ENCODE measurements at regions of chr10 and their contacts with region 1.

Region 1: GRCh38 chr10:97686962-97687784 is at the start of gene AVPI1:
- DNase-seq: peak; percentile 96 to 97 (median 97)
- H3K4me3 ChIP-seq: peak within 1 kb of the TSS; percentile 86 to 87
- H3K4me3 Mint-ChIP-seq: peak within 1 kb of the TSS; percentile 84 to 92 (median 88)
- H3K27ac ChIP-seq: peak within 1 kb of the TSS; percentile 71
- H3K27ac Mint-ChIP-seq: peak within 1 kb of the TSS; percentile 64 to 96 (median 92)
- H3K4me1 ChIP-seq: peaks cover 29% of the 10 kb centered on the region
- H3K4me1 Mint-ChIP-seq: peaks cover 5 to 15% (median 10%) of the 10 kb centered on the region in 4 donors
- H3K27me3 ChIP-seq: no peaks in the 10 kb centered on the region
- H3K27me3 Mint-ChIP-seq: no peaks in the 10 kb centered on the region
- total RNA-seq, gene AVPI1: 1.9 to 2.2 TPM

Region 2: DNA sequence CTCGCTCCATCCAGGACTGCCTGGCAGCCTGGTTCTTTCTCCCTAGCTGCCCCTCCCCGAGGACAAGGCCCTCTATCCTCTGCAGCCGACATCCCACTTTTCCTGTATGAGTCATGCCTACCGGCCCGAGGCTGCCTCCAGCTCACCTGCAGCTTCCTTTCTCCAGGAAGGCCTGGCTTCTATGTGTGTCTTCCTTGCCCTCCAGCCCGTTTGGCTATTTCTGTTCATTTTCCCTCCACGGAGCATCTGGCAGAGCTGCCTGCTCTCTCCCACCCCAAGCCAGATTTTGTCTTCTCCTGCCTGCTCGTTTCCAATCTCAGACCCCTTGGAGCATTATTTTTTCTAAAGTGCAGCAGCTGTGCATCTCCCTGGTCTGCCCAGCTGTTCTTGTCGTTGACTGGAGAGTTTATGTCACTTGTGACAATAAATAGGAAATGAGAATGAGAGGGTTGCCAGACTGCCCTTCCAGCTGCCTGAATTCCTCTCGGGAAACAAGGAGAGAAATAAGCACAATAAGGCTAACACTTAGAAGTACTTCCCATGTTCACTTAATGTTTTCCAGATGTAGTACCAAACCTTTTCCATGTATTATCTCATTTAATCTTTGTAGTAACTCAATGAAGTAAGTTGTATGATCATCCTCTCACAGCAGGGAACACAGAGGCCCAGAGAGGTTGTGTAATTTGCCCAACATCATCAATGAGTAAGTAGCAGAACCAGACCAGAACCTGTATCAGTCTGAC is 168.7 kb before region 1 on chr10:
- CTCF ChIA-PET with region 1: no interaction called
- POLR2A ChIA-PET with region 1: no interaction called
- intact Hi-C with region 1: no loop called
- DNase-seq: no peak
- H3K4me3 ChIP-seq: no peak overlapping the region
- H3K4me3 Mint-ChIP-seq: no peak overlapping the region
- H3K27ac ChIP-seq: no peak overlapping the region
- H3K27ac Mint-ChIP-seq: peak overlapping the region in 2 of 7 donors; percentile 6 to 24
- H3K4me1 ChIP-seq: no peaks in the 10 kb centered on the region
- H3K4me1 Mint-ChIP-seq: no peaks in the 10 kb centered on the region
- H3K27me3 ChIP-seq: no peaks in the 10 kb centered on the region
- H3K27me3 Mint-ChIP-seq: peaks cover 2 to 10% of the 10 kb centered on the region in 2 donors

Region 3: GRCh38 chr10:97632949-97633884 is 54.0 kb before region 1 on chr10 and contains the start of gene MORN4:
- CTCF ChIA-PET with region 1: no interaction called
- POLR2A ChIA-PET with region 1: interaction called, 3 read pairs
- intact Hi-C with region 1: loop called (anchors 2 kb)
- DNase-seq: peak; percentile 91 to 92 (median 91)
- H3K4me3 ChIP-seq: peak within 1 kb of the TSS; percentile 53 to 55
- H3K4me3 Mint-ChIP-seq: peak within 1 kb of the TSS; percentile 92 to 99 (median 97)
- H3K27ac ChIP-seq: peak within 1 kb of the TSS; percentile 36
- H3K27ac Mint-ChIP-seq: peak within 1 kb of the TSS; percentile 83 to 97 (median 91)
- H3K4me1 ChIP-seq: peaks cover 10% of the 10 kb centered on the region
- H3K4me1 Mint-ChIP-seq: peaks cover 7 to 19% (median 14%) of the 10 kb centered on the region in 4 donors
- H3K27me3 ChIP-seq: no peaks in the 10 kb centered on the region
- H3K27me3 Mint-ChIP-seq: no peaks in the 10 kb centered on the region
- total RNA-seq, gene MORN4: 2.1 to 3.0 TPM

Region 4: GRCh38 chr10:97676770-97677581 is 10.2 kb before region 1 on chr10:
- CTCF ChIA-PET with region 1: interaction called, 66 read pairs
- POLR2A ChIA-PET with region 1: interaction called, 13 read pairs
- intact Hi-C with region 1: no loop called
- DNase-seq: peak; percentile 48 to 56 (median 53)
- H3K4me3 ChIP-seq: no peak overlapping the region
- H3K4me3 Mint-ChIP-seq: no peak overlapping the region
- H3K27ac ChIP-seq: no peak overlapping the region
- H3K27ac Mint-ChIP-seq: peak overlapping the region in 4 of 7 donors; percentile 7 to 73 (median 38)
- H3K4me1 ChIP-seq: no peaks in the 10 kb centered on the region
- H3K4me1 Mint-ChIP-seq: peaks cover 0 to 1% (median 0%) of the 10 kb centered on the region in 4 donors
- H3K27me3 ChIP-seq: no peaks in the 10 kb centered on the region
- H3K27me3 Mint-ChIP-seq: no peaks in the 10 kb centered on the region

Region 5: GRCh38 chr10:97714048-97714371 is 26.8 kb after region 1 on chr10:
- CTCF ChIA-PET with region 1: interaction called, 118 read pairs
- POLR2A ChIA-PET with region 1: interaction called, 31 read pairs
- intact Hi-C with region 1: no loop called
- DNase-seq: peak; percentile 50 to 69 (median 54)
- H3K4me3 ChIP-seq: peak overlapping the region; percentile 30 to 55
- H3K4me3 Mint-ChIP-seq: peak overlapping the region; percentile 98 to 100 (median 99)
- H3K27ac ChIP-seq: no peak overlapping the region
- H3K27ac Mint-ChIP-seq: peak overlapping the region; percentile 37 to 96 (median 92)
- H3K4me1 ChIP-seq: peaks cover 6% of the 10 kb centered on the region
- H3K4me1 Mint-ChIP-seq: peaks cover 7 to 22% (median 14%) of the 10 kb centered on the region in 4 donors
- H3K27me3 ChIP-seq: no peaks in the 10 kb centered on the region
- H3K27me3 Mint-ChIP-seq: peaks cover 7 to 9% of the 10 kb centered on the region in 2 donors

Region 6: DNA sequence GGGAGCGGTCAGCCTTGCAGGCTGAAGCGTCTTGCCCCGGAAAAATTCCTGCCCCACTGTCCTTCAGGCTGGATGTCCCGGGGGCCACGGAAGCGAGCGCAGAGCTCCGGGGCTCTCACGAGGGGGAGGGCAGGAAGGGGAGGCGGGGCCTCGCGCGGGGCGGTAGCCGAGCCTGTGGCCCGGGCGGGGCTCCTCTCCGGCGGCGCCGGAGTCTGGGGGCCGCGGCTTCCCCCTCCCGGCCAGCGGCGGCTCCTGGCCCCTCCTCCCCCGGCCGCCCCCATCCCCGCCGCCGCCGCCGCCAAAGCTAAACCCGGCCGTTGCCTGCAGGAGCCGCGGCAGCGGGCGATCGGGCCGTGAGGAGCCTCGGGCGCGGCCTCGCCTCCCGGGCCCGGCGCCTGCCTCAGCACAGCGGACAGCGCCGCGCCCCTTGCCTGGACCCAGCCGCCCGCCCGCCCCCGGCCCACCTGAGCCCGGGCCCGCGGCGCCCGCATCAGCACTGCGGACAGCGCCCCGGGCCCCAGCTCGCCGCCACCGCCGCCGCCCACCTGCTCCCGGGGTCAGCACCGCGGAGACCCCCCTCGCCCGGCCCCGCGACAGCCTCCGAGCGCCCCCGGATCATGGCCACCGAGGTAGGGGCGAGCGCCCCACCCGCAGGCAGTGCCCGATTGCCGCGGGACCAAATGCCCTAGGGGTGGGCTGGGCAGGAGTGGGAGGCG is 162.7 kb after region 1 on chr10 and contains the start of gene GOLGA7B:
- CTCF ChIA-PET with region 1: no interaction called
- POLR2A ChIA-PET with region 1: interaction called, 7 read pairs
- intact Hi-C with region 1: loop called (anchors 2 kb)
- DNase-seq: peak; percentile 60 to 72 (median 70)
- H3K4me3 ChIP-seq: peak within 1 kb of the TSS; percentile 76 to 79
- H3K4me3 Mint-ChIP-seq: peak within 1 kb of the TSS; percentile 92 to 98 (median 94)
- H3K27ac ChIP-seq: peak within 1 kb of the TSS; percentile 32
- H3K27ac Mint-ChIP-seq: peak within 1 kb of the TSS; percentile 87 to 94 (median 91)
- H3K4me1 ChIP-seq: peaks cover 40% of the 10 kb centered on the region
- H3K4me1 Mint-ChIP-seq: peaks cover 29 to 46% (median 39%) of the 10 kb centered on the region in 4 donors
- H3K27me3 ChIP-seq: no peaks in the 10 kb centered on the region
- H3K27me3 Mint-ChIP-seq: no peaks in the 10 kb centered on the region
- total RNA-seq, gene GOLGA7B: 7.6 to 7.9 TPM

Measured in CD4-positive, alpha-beta memory T cell (primary cell).